Naive thymus-derived CD4-positive, alpha-beta T cell (primary cell): ENCODE measurements at regions of chr3 and their contacts with region 1.

Region 1: GRCh38 chr3:189276481-189277219 is 104.9 kb downstream of the TPRG1 start:
- DNase-seq: no peak
- ATAC-seq: peak; percentile 57
- H3K4me3 ChIP-seq: no peak overlapping the region
- H3K4me3 Mint-ChIP-seq: peak overlapping the region in 6 of 10 donors; percentile 9 to 45 (median 26)
- H3K27ac ChIP-seq: no peak overlapping the region
- H3K27ac Mint-ChIP-seq: peak overlapping the region in 1 of 9 donors; percentile 26
- H3K4me1 ChIP-seq: peaks cover 0 to 27% of the 10 kb centered on the region in 2 donors
- H3K4me1 Mint-ChIP-seq: peaks cover 21 to 63% (median 46%) of the 10 kb centered on the region in 7 donors
- H3K27me3 ChIP-seq: no peaks in the 10 kb centered on the region
- H3K27me3 Mint-ChIP-seq: peaks cover 0 to 3% (median 0%) of the 10 kb centered on the region in 5 donors

Region 2: GRCh38 chr3:189334064-189334920 is 57.6 kb after region 1 on chr3:
- CTCF ChIA-PET with region 1: interaction called, 4 read pairs
- POLR2A ChIA-PET with region 1: no interaction called
- intact Hi-C with region 1: loop called in 1 of 2 experiments (anchors 2 kb)
- DNase-seq: no peak
- ATAC-seq: peak; percentile 20
- H3K4me3 ChIP-seq: no peak overlapping the region
- H3K4me3 Mint-ChIP-seq: peak overlapping the region in 2 of 10 donors; percentile 2 to 3
- H3K27ac ChIP-seq: no peak overlapping the region
- H3K27ac Mint-ChIP-seq: peak overlapping the region in 3 of 9 donors; percentile 20 to 46 (median 28)
- H3K4me1 ChIP-seq: peaks cover 18 to 19% of the 10 kb centered on the region in 2 donors
- H3K4me1 Mint-ChIP-seq: peaks cover 22 to 66% (median 47%) of the 10 kb centered on the region in 7 donors
- H3K27me3 ChIP-seq: no peaks in the 10 kb centered on the region
- H3K27me3 Mint-ChIP-seq: no peaks in the 10 kb centered on the region